ENCODE measurements at regions of chr2 and their contacts with region 1.

Region 1: DNA sequence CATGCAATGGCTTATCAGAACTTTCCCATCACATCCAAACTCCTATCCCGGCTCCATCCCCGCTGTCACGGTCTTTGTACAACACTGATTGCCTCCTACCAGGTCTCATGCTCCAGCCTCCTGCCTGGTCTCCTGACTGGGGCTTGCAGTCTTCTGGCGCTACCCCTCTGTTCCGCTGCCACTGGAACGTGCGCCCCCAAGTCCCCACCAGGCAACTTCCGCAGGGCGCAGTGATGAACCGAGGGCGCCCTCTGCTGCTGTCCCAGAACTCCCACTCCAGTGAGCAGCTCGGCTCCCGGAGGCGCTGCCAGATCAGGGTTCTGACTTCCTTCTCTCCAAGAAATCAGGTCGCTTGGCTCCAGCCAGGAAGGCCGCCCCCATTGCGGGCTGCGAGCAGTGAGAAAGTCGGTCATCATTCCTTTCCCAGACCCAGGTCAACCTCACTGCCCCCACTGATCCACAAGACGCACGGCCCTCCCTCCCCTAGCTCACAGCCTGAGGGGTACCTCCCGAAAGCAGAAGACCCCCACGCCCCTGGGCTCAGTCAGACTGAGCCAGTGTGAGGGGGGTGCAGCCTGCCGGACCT is 43.9 kb upstream of the RAB11FIP5 start:
- DNase-seq: no peak
- H3K4me3 ChIP-seq: no peak overlapping the region
- H3K27ac ChIP-seq: no peak overlapping the region
- H3K4me1 ChIP-seq: no peaks in the 10 kb centered on the region
- H3K27me3 ChIP-seq: no peaks in the 10 kb centered on the region
- CTCF ChIP-seq: peak in 2 of 3 experiments; percentile 4 to 40
- POLR2A ChIP-seq: no peak

Region 2: DNA sequence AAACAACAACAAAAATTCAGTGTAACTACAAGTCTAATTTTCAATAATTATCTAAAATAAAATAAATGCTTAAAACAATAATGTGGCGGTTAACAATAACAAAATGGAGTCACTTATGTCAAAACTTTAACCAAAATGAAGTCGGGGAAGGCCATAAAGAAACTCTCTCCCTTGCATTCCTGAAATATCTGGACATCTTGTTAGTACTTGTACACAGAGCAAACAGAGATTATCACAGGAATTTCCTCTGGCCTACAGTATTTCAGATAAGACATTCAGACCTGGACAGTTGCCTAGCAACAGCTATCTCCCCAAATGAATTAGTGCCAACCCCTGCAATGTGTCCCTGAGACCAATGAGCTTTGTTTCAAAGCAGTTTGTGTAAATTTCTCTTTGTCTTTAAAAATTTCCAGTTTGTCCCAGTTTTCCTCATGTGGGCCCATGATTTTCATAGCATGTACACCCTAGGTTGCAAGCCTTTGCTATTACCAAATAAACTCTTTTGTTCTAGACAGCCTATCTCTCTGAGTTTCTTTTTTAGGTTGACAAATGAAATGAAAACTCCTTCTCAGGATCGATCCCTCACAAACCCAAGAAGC is 399.4 kb before region 1 on chr2:
- intact Hi-C with region 1: no loop called
- DNase-seq: no peak
- H3K4me3 ChIP-seq: no peak overlapping the region
- H3K27ac ChIP-seq: no peak overlapping the region
- H3K4me1 ChIP-seq: peaks cover 5% of the 10 kb centered on the region
- H3K27me3 ChIP-seq: no peaks in the 10 kb centered on the region
- CTCF ChIP-seq: no peak
- POLR2A ChIP-seq: no peak

Region 3: GRCh38 chr2:72892506-72893173 is 264.0 kb before region 1 on chr2:
- intact Hi-C with region 1: loop called (anchors 5 kb)
- DNase-seq: no peak
- H3K4me3 ChIP-seq: no peak overlapping the region
- H3K27ac ChIP-seq: no peak overlapping the region
- H3K4me1 ChIP-seq: peaks cover 27% of the 10 kb centered on the region
- H3K27me3 ChIP-seq: no peaks in the 10 kb centered on the region
- CTCF ChIP-seq: peak in 2 of 3 experiments; percentile 33 to 52
- POLR2A ChIP-seq: no peak

Region 4: GRCh38 chr2:73080711-73081131 is 75.9 kb before region 1 on chr2:
- intact Hi-C with region 1: loop called (anchors 5 kb)
- DNase-seq: no peak
- H3K4me3 ChIP-seq: no peak overlapping the region
- H3K27ac ChIP-seq: no peak overlapping the region
- H3K4me1 ChIP-seq: peaks cover 12% of the 10 kb centered on the region
- H3K27me3 ChIP-seq: no peaks in the 10 kb centered on the region
- CTCF ChIP-seq: no peak
- POLR2A ChIP-seq: no peak